T-cell (primary cell): ENCODE measurements at regions of chr2 and their contacts with region 1.

Region 1: DNA sequence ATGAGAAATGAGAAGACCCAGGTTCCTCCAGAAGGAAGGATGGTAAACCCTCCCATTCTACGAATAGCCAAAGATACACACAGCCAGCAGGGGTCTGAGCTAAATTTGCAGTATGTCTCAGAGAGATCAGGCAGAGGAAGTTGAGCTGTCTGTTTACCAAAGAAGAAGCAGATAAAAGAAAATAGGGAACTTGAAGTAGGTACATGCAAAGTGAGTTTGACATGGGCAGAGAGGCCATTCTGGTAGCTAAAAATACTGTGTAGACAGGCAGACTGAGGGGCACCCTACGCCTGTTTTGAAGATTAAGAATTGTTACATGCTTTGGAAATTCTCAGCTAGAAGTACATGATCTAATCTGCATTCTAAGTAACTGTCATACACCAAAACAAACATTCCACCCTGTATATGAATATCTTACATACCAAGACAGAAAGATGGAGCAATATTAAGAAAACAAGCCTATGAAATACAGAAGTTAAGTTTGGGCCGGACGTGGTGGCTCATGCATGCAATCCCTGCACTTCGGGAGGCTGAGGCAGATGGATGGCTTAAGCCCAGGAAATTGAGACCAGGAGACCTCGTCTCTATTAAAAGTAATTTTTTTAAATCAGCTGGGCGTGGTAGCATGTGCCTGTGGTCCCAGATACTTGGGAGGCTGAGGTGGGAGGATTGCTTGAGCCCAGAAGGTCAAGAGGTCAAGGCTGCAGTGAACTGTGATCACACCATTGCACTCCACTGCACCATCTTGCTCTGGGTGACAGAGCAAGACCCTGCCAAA is 157.9 kb downstream of the ANKRD44 start:
- DNase-seq: peak in 30 of 35 experiments; percentile 10 to 62 (median 33)
- ATAC-seq: peak; percentile 91 to 96 (median 92)
- H3K4me3 ChIP-seq: peak overlapping the region in 1 of 2 donors; percentile 23
- H3K4me3 Mint-ChIP-seq: peak overlapping the region; percentile 28 to 76 (median 52)
- H3K27ac ChIP-seq: peak overlapping the region; percentile 48
- H3K27ac Mint-ChIP-seq: peak overlapping the region; percentile 90 to 95
- H3K4me1 ChIP-seq: peaks cover 34 to 38% of the 10 kb centered on the region in 2 experiments
- H3K4me1 Mint-ChIP-seq: peaks cover 84 to 87% (median 86%) of the 10 kb centered on the region in 3 donors
- H3K27me3 ChIP-seq: no peaks in the 10 kb centered on the region
- H3K27me3 Mint-ChIP-seq: no peaks in the 10 kb centered on the region

Region 2: GRCh38 chr2:195486987-195487644 is 1665.5 kb before region 1 on chr2:
- CTCF ChIA-PET with region 1: no interaction called
- POLR2A ChIA-PET with region 1: no interaction called
- DNase-seq: peak in 1 of 35 experiments; percentile 19
- ATAC-seq: peak; percentile 60 to 96 (median 88)
- H3K4me3 ChIP-seq: no peak overlapping the region
- H3K4me3 Mint-ChIP-seq: peak overlapping the region in 1 of 3 donors; percentile 13
- H3K27ac ChIP-seq: no peak overlapping the region
- H3K27ac Mint-ChIP-seq: peak overlapping the region; percentile 50 to 51
- H3K4me1 ChIP-seq: peaks cover 0 to 6% of the 10 kb centered on the region in 2 experiments
- H3K4me1 Mint-ChIP-seq: peaks cover 13 to 29% (median 20%) of the 10 kb centered on the region in 3 donors
- H3K27me3 ChIP-seq: no peaks in the 10 kb centered on the region
- H3K27me3 Mint-ChIP-seq: no peaks in the 10 kb centered on the region

Region 3: GRCh38 chr2:195601361-195601760 is 1551.3 kb before region 1 on chr2:
- CTCF ChIA-PET with region 1: no interaction called
- POLR2A ChIA-PET with region 1: no interaction called
- DNase-seq: no peak
- ATAC-seq: no peak
- H3K4me3 ChIP-seq: no peak overlapping the region
- H3K4me3 Mint-ChIP-seq: no peak overlapping the region
- H3K27ac ChIP-seq: no peak overlapping the region
- H3K27ac Mint-ChIP-seq: peak overlapping the region in 1 of 2 donors; percentile 46
- H3K4me1 ChIP-seq: no peaks in the 10 kb centered on the region
- H3K4me1 Mint-ChIP-seq: peaks cover 4 to 12% (median 11%) of the 10 kb centered on the region in 3 donors
- H3K27me3 ChIP-seq: no peaks in the 10 kb centered on the region
- H3K27me3 Mint-ChIP-seq: no peaks in the 10 kb centered on the region

Region 4: GRCh38 chr2:197229509-197230443 is 77.1 kb after region 1 on chr2:
- CTCF ChIA-PET with region 1: no interaction called
- POLR2A ChIA-PET with region 1: interaction called in 1 of 2 experiments, 14 read pairs
- DNase-seq: no peak
- ATAC-seq: no peak
- H3K4me3 ChIP-seq: no peak overlapping the region
- H3K4me3 Mint-ChIP-seq: peak overlapping the region; percentile 9 to 31 (median 20)
- H3K27ac ChIP-seq: no peak overlapping the region
- H3K27ac Mint-ChIP-seq: peak overlapping the region; percentile 89 to 93
- H3K4me1 ChIP-seq: peaks cover 64 to 67% of the 10 kb centered on the region in 2 experiments
- H3K4me1 Mint-ChIP-seq: peaks cover 94 to 98% (median 96%) of the 10 kb centered on the region in 3 donors
- H3K27me3 ChIP-seq: no peaks in the 10 kb centered on the region
- H3K27me3 Mint-ChIP-seq: no peaks in the 10 kb centered on the region

Region 5: DNA sequence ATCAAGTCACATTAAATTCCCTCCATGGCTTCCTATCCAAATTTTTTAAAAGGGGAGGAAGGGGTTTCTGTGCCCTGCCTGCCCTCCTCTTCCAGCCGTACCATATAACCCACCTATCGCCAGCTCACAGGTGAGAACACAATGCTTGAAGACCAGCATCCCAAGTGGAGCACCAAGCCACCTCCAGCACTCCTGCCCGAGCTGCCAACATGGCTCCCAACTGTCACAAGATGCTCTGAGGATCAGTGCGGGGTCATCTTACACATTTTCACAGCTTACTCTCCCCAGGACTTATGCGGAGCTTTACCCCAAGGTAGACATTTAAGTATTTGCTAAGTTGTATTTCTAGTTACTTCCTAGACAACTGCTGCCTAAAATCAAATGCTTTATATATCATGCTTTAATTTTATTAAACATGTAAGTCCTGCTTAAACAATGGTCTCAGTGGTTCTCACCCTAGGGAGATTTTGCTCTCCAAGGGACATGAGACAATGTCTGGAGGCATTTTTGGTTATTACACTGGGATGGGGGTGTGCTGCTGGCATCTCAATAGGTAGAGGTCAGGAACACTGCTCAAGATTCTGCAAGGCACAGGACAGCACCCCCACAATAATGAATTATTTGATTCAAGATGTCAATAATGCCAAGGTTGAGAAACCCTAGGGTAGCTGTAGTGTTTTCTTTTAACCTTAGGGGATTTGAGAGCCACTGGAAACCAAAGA is 236.4 kb after region 1 on chr2:
- CTCF ChIA-PET with region 1: interaction called in 1 of 2 experiments, 11 read pairs
- POLR2A ChIA-PET with region 1: no interaction called
- DNase-seq: no peak
- ATAC-seq: peak in 2 of 4 experiments; percentile 17 to 26
- H3K4me3 ChIP-seq: no peak overlapping the region
- H3K4me3 Mint-ChIP-seq: no peak overlapping the region
- H3K27ac ChIP-seq: no peak overlapping the region
- H3K27ac Mint-ChIP-seq: peak overlapping the region; percentile 2 to 19
- H3K4me1 ChIP-seq: no peaks in the 10 kb centered on the region
- H3K4me1 Mint-ChIP-seq: peaks cover 4 to 10% (median 7%) of the 10 kb centered on the region in 3 donors
- H3K27me3 ChIP-seq: no peaks in the 10 kb centered on the region
- H3K27me3 Mint-ChIP-seq: no peaks in the 10 kb centered on the region

Region 6: DNA sequence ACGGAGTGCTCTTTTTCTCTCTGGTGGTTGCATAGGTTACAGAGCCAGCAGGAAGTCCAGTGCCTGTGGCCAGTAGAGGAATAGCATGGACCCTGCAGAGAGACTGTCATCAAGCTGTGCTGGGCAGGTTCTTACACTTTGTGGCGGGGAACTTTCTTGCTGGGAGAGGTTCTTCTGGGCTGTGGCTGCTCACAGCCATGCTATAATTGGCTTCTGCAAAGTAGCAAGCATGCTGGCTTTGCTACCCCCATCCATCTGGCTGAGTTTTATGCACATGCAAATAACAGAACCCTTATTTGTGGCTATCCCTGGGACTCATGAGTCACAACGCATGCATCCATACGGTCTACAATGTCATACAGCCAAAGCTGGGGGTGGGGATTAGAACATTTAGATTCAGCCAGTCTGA is 720.7 kb after region 1 on chr2:
- CTCF ChIA-PET with region 1: no interaction called
- POLR2A ChIA-PET with region 1: no interaction called
- DNase-seq: no peak
- ATAC-seq: no peak
- H3K4me3 ChIP-seq: no peak overlapping the region
- H3K4me3 Mint-ChIP-seq: no peak overlapping the region
- H3K27ac ChIP-seq: no peak overlapping the region
- H3K27ac Mint-ChIP-seq: no peak overlapping the region
- H3K4me1 ChIP-seq: peaks cover 25 to 44% of the 10 kb centered on the region in 2 experiments
- H3K4me1 Mint-ChIP-seq: peaks cover 56 to 78% (median 63%) of the 10 kb centered on the region in 3 donors
- H3K27me3 ChIP-seq: no peaks in the 10 kb centered on the region
- H3K27me3 Mint-ChIP-seq: no peaks in the 10 kb centered on the region